K562 (cell line): ENCODE measurements at regions of chr2 and their contacts with region 1.

Region 1: GRCh38 chr2:72887754-72888437 is 688 bp downstream of the SPR start:
- DNase-seq: peak; percentile 77 to 90 (median 81)
- ATAC-seq: peak; percentile 87
- H3K4me3 ChIP-seq: peak overlapping the region; percentile 85
- H3K27ac ChIP-seq: peak overlapping the region; percentile 62; the same call in 2 of the 3 replicates
- H3K4me1 ChIP-seq: peaks cover 9 to 15% of the 10 kb centered on the region in 2 experiments; a peak in 4 of 5 replicates
- H3K27me3 ChIP-seq: 0 out of 5 replicates have a peak, but pooled peaks cover 3 to 5% of the 10 kb centered on the region in 2 experiments
- CTCF ChIP-seq: peak; percentile 91 to 97 (median 94)
- EP300 ChIP-seq: peak; percentile 3; the same call in 1 of the 2 replicates
- POLR2A ChIP-seq: no peak
- RAD21 ChIP-seq: peak; percentile 41 to 64

Region 2: GRCh38 chr2:72770879-72771461 is 116.9 kb before region 1 on chr2:
- CTCF ChIA-PET with region 1: interaction called, 10 read pairs
- POLR2A ChIA-PET with region 1: interaction called, 3 read pairs
- in situ Hi-C with region 1: no loop called
- intact Hi-C with region 1: loop called (anchors 1 kb)
- DNase-seq: peak; percentile 41 to 76 (median 54)
- ATAC-seq: peak; percentile 76
- H3K4me3 ChIP-seq: no peak overlapping the region
- H3K27ac ChIP-seq: no peak overlapping the region
- H3K4me1 ChIP-seq: no peaks in the 10 kb centered on the region
- H3K27me3 ChIP-seq: no peaks in the 10 kb centered on the region; a peak in 1 of 5 replicates
- CTCF ChIP-seq: peak; percentile 66 to 94 (median 69); a peak in 5 of 6 replicates
- EP300 ChIP-seq: no peak
- POLR2A ChIP-seq: no peak
- RAD21 ChIP-seq: peak; percentile 96

Region 3: DNA sequence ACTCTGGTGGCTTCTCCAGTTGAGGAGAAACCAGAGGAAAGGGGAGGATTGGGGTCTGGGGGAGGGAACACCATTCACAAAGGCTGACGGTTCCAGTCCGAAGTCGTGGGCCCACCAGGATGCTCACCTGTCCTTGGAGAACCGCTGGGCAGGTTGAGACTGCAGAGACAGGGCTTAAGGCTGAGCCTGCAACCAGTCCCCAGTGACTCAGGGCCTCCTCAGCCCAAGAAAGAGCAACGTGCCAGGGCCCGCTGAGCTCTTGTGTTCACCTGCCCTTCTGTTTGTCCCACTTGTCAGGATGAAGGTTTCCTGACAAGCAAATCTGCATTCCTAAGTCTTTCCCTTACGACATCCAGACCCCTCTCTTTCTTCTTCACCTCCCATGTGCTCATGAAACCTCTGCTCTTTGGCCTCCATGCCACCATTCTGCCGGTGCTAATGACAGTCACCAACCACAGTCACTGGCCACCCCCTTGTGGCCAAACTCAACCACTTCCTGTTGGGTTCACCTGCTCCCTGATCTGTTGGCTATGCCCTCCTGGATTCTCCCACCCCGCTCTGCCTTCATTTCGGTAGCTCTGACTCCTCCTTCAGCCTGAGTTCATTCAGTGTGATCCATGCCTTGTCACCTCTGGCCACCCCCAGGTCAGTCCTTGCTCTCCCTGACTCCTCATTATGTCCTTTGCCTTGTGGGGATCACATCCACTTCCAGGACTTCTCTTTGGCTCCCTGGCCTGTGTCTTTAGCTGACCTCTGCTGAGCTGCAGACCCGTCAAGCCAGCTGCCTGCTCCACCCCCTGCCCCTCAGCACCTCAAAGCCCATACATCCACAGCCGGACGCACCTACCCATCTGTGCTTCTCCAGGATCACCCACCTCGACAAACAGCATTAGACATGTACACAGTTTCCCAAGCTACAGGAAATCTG is 47.1 kb after region 1 on chr2:
- CTCF ChIA-PET with region 1: interaction called, 3 read pairs
- POLR2A ChIA-PET with region 1: no interaction called
- in situ Hi-C with region 1: loop called (anchors 5 kb)
- intact Hi-C with region 1: loop called (anchors 1 kb)
- DNase-seq: peak; percentile 67 to 75 (median 72)
- ATAC-seq: peak; percentile 85
- H3K4me3 ChIP-seq: no peak overlapping the region
- H3K27ac ChIP-seq: no peak overlapping the region
- H3K4me1 ChIP-seq: peaks cover 0 to 7% of the 10 kb centered on the region in 2 experiments; a peak in 1 of 5 replicates
- H3K27me3 ChIP-seq: peaks cover 5 to 73% of the 10 kb centered on the region in 2 experiments; a peak in 3 of 5 replicates
- CTCF ChIP-seq: peak; percentile 78 to 83 (median 79)
- EP300 ChIP-seq: no peak
- POLR2A ChIP-seq: no peak
- RAD21 ChIP-seq: peak; percentile 54 to 91

Region 4: DNA sequence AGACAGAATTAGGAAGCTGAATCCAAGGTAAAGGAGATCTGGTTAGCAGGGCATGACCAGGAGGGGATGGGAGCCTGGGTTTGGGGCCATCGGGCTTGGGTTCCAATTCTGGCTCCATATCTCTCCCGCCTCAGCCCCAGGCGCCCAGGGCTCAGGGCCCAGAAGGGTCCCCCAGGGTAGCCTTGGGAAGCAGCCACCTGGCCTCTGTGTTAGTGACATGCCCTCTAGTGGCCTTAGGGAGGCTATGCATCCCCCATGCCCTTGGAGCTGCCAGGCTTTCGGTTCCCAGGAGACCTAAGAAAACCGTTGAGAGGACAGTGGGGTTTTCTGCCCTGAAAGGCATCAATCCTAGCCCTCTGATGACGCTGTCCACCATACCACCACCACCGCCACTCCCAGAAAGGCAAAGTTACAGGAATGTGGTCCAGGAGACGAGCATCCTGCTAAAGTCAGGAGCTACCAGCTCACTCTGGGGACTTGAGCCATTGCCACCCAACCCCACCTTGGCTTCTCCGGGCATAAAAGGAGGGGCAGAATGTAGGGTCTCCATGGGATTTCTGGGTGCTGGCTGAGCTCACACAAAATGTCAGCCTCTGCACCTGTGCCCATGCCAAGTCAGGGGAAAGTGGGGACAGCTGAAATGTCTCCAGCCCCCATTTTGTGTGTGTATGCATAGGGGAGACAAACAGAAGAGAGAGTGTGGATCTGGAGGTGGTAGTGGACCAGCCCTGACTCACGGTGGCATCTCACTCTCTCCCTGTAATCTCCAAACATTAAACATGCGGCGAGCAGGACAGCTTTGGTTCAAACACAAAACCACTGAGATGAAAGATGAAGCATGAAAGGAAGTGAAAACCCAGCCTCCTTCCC is 85.9 kb after region 1 on chr2:
- CTCF ChIA-PET with region 1: interaction called, 16 read pairs
- POLR2A ChIA-PET with region 1: no interaction called
- in situ Hi-C with region 1: no loop called
- intact Hi-C with region 1: loop called (anchors 1 kb)
- DNase-seq: peak; percentile 65 to 80 (median 79)
- ATAC-seq: peak; percentile 98
- H3K4me3 ChIP-seq: no peak overlapping the region
- H3K27ac ChIP-seq: no peak overlapping the region
- H3K4me1 ChIP-seq: peaks cover 0 to 5% of the 10 kb centered on the region in 2 experiments; a peak in 1 of 5 replicates
- H3K27me3 ChIP-seq: no peaks in the 10 kb centered on the region
- CTCF ChIP-seq: peak; percentile 74 to 87 (median 76)
- EP300 ChIP-seq: no peak
- POLR2A ChIP-seq: no peak
- RAD21 ChIP-seq: peak in 1 of 2 experiments; percentile 57; a peak in 2 of 4 replicates

Region 5: GRCh38 chr2:73071360-73072133 is 183.7 kb after region 1 on chr2 and contains the start of gene SFXN5:
- CTCF ChIA-PET with region 1: no interaction called
- POLR2A ChIA-PET with region 1: no interaction called
- in situ Hi-C with region 1: no loop called
- intact Hi-C with region 1: loop called (anchors 5 kb)
- DNase-seq: peak; percentile 98 to 100 (median 99)
- ATAC-seq: peak; percentile 91
- H3K4me3 ChIP-seq: peak within 1 kb of the TSS; percentile 68
- H3K27ac ChIP-seq: peak within 1 kb of the TSS; percentile 95
- H3K4me1 ChIP-seq: peaks cover 17 to 27% of the 10 kb centered on the region in 2 experiments
- H3K27me3 ChIP-seq: no peaks in the 10 kb centered on the region
- CTCF ChIP-seq: peak in 2 of 3 experiments; percentile 17 to 18; a peak in 1 of 6 replicates
- EP300 ChIP-seq: no peak
- POLR2A ChIP-seq: peak; percentile 94
- RAD21 ChIP-seq: no peak
- polyA plus RNA-seq, gene SFXN5: 8.3 to 13.4 TPM

Region 6: DNA sequence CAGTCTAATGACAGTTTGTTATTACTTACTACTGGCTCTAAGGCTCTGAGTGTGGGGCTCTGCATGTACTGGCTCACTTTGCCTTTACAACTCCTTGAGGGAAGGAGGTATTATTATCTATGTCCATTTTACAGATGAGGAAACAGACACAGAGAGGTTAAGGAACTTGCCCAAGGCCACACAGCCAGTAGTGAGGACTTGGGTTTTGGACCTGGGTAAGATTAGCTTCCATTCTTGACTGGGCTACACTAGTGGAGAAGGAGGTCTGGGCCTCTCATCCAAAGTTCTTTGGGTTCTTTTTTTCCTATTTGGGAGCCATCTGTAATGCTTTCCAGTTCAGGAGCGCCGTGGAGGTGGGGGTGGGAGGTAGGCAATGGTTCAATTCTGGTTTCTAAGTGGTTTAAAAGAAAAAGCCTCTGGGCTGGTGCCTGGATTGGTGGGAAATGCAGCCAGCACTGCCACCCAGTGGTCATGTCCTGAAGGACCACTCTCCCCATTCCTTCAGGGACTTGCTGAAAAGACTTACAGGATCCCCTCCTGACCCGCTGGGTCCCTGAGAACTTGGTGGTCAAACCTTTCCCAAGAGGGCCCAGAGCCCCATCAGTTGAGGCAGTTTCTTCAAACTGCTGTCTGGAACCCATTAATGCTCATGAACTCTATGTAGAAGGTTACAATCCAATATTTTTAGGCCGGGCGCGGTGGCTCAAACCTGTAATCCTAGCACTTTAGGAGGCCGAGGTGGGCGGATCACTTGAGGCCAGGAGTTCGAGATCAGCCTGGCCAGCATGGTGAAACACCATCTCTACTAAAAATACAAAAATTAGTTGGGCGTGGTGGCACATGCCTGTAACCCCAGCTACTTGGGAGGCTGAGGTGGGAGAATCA is 275.8 kb after region 1 on chr2:
- CTCF ChIA-PET with region 1: interaction called, 26 read pairs
- POLR2A ChIA-PET with region 1: no interaction called
- in situ Hi-C with region 1: loop called (anchors 5 kb)
- intact Hi-C with region 1: loop called (anchors 1 kb)
- DNase-seq: peak; percentile 81 to 86 (median 84)
- ATAC-seq: peak; percentile 97
- H3K4me3 ChIP-seq: no peak overlapping the region
- H3K27ac ChIP-seq: no peak overlapping the region
- H3K4me1 ChIP-seq: peaks cover 5% of the 10 kb centered on the region in 2 experiments; a peak in 3 of 5 replicates
- H3K27me3 ChIP-seq: peaks cover 0 to 4% of the 10 kb centered on the region in 2 experiments; a peak in 2 of 5 replicates
- CTCF ChIP-seq: peak; percentile 84 to 95 (median 91)
- EP300 ChIP-seq: no peak
- POLR2A ChIP-seq: no peak
- RAD21 ChIP-seq: peak; percentile 86 to 88

Region 7: DNA sequence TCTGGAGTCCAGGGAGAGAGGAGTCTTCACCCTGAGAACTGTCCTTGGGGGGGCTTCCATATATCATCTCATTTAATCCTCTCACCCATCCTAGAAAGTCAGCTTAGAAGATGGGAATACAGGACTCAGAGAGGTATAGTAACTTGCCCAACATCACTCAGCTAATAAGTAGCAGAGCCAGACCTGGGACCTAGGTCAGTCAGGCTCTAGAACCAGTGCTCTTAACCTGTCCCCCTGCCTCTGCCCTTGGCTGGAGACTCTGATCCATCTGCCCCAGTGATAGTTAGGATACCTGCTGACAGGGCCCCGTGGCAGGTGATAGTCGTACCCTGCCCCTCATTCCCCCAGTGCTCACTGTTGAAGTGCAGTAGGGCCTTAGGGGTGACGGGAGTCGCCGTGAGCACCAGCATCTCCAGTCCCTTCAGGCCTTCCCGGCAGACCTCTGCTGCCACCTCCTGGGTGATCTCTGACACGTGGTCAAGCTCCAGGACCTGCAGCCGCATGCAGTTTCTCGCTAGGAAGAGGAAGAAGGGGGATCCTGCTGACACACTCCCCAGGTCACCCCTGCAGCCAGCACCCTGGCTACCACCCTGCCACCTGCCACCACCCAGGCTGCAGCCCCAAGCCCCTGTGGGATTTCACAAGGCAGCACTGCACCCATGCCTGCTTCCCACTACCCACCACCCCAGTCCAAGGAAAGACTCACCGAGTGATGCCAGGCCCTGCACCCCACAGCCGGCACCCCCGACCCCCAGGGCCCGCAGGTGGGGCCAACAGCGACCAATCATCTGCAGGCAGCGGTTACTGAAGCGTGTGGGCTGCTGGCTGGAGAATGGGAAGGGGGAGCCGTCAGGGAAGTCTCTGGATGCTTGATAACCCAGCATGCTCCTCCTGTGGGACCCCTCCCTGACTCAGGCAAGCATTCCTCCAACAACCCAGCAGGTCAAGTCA is 372.4 kb after region 1 on chr2:
- CTCF ChIA-PET with region 1: interaction called, 10 read pairs
- POLR2A ChIA-PET with region 1: no interaction called
- in situ Hi-C with region 1: no loop called
- intact Hi-C with region 1: loop called (anchors 1 kb)
- DNase-seq: peak; percentile 80 to 84 (median 80)
- ATAC-seq: peak; percentile 94
- H3K4me3 ChIP-seq: no peak overlapping the region
- H3K27ac ChIP-seq: no peak overlapping the region
- H3K4me1 ChIP-seq: peaks cover 2 to 13% of the 10 kb centered on the region in 2 experiments; a peak in 2 of 5 replicates
- H3K27me3 ChIP-seq: no peaks in the 10 kb centered on the region
- CTCF ChIP-seq: peak; percentile 80 to 84 (median 80)
- EP300 ChIP-seq: no peak
- POLR2A ChIP-seq: no peak
- RAD21 ChIP-seq: peak; percentile 58 to 77